Ovary (tissue), 10 donors: ENCODE measurements at regions of chr19 and their contacts with region 1.

Region 1: GRCh38 chr19:17996826-17997316 is 11.1 kb upstream of the ARRDC2 start:
- DNase-seq: peak; percentile 79 to 92 (median 89)
- H3K4me3 ChIP-seq: no peak overlapping the region
- H3K27ac ChIP-seq: no peak overlapping the region
- H3K4me1 ChIP-seq: peaks cover 2% of the 10 kb centered on the region
- H3K27me3 ChIP-seq: no peaks in the 10 kb centered on the region
- CTCF ChIP-seq: peak; percentile 84 to 99 (median 98)
- EP300 ChIP-seq: no peak
- POLR2A ChIP-seq: peak; percentile 30

Region 2: DNA sequence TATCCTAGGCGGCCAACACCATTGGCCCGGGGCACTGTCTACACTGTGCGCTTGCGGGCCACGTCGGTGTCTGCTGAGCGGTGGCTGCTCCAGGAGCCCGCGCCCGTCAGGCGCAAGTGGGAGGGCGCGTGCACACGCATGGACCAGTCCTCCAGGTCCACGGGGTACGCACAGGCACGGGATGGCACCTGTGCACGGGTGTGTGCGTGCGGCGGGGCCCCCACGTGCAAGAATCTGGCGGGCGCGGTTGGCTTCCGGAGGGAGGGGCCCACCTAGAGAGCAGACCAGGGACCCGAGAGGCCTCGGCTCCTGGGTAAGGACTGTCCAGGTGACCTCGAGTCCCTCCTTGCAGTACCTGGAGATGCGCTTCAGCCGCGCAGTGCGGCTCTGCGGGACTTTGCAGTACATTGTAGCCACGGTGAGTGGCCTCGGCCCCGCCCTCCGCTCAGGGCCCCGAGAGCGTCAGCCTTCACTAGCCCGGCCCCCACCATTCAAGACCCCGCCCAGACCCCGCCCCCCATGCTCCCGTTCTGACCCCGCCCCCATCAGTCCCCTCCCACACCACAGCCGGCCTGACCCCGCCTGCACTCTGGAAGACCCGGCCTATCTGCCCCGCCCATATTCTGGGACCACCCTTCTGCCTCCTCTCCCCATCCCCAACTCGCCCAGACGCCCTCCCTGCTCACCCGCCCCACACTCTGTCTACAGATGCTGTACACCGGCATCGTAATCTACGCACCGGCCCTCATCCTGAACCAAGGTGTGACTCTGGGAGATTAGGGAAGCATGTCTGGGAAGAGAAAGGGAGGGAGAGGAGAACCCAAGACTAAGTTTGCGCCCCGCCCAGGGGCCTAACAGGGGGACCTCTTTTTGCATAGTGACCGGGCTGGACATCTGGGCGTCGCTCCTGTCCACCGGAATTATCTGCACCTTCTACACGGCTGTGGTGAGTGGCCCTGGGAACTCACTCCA is 122.8 kb before region 1 on chr19:
- intact Hi-C with region 1: loop called in 2 of 4 experiments (anchors 5 to 10 kb)
- DNase-seq: no peak
- H3K4me3 ChIP-seq: no peak overlapping the region
- H3K27ac ChIP-seq: no peak overlapping the region
- H3K4me1 ChIP-seq: peaks cover 4% of the 10 kb centered on the region
- H3K27me3 ChIP-seq: peaks cover 6% of the 10 kb centered on the region
- CTCF ChIP-seq: no peak
- EP300 ChIP-seq: no peak
- POLR2A ChIP-seq: no peak

Region 3: GRCh38 chr19:17938092-17938845 is 58.6 kb before region 1 on chr19:
- intact Hi-C with region 1: loop called (anchors 2 kb)
- DNase-seq: peak; percentile 72 to 87 (median 83)
- H3K4me3 ChIP-seq: no peak overlapping the region
- H3K27ac ChIP-seq: no peak overlapping the region
- H3K4me1 ChIP-seq: peaks cover 7% of the 10 kb centered on the region
- H3K27me3 ChIP-seq: no peaks in the 10 kb centered on the region
- CTCF ChIP-seq: peak; percentile 72 to 93 (median 82)
- EP300 ChIP-seq: no peak
- POLR2A ChIP-seq: no peak

Region 4: GRCh38 chr19:17950310-17951156 is 46.3 kb before region 1 on chr19:
- intact Hi-C with region 1: loop called in 1 of 4 experiments (anchors 5 kb)
- DNase-seq: peak in 1 of 5 donors; percentile 47
- H3K4me3 ChIP-seq: no peak overlapping the region
- H3K27ac ChIP-seq: no peak overlapping the region
- H3K4me1 ChIP-seq: peaks cover 9% of the 10 kb centered on the region
- H3K27me3 ChIP-seq: peaks cover 14% of the 10 kb centered on the region
- CTCF ChIP-seq: no peak
- EP300 ChIP-seq: no peak
- POLR2A ChIP-seq: no peak